Activated CD4-positive, alpha-beta T cell treated with anti-CD3 and anti-CD28 coated beads for 36 hours (primary cell): ENCODE measurements at regions of chr5 and their contacts with region 1.

Region 1: GRCh38 chr5:177113566-177114424 is 19.8 kb upstream of the NSD1 start:
- DNase-seq: peak; percentile 88
- ATAC-seq: peak; percentile 49
- H3K4me3 Mint-ChIP-seq: no peak overlapping the region
- H3K27ac Mint-ChIP-seq: peak overlapping the region; percentile 11
- H3K4me1 Mint-ChIP-seq: peaks cover 15% of the 10 kb centered on the region
- H3K27me3 Mint-ChIP-seq: no peaks in the 10 kb centered on the region

Region 2: GRCh38 chr5:176660860-176661641 is 452.7 kb before region 1 on chr5:
- CTCF ChIA-PET with region 1: interaction called, 13 read pairs
- POLR2A ChIA-PET with region 1: no interaction called
- intact Hi-C with region 1: loop called (anchors 1 to 5 kb)
- DNase-seq: peak; percentile 89
- ATAC-seq: peak; percentile 78
- H3K4me3 Mint-ChIP-seq: no peak overlapping the region
- H3K27ac Mint-ChIP-seq: no peak overlapping the region
- H3K4me1 Mint-ChIP-seq: peaks cover 29% of the 10 kb centered on the region
- H3K27me3 Mint-ChIP-seq: peaks cover 8% of the 10 kb centered on the region

Region 3: GRCh38 chr5:177086924-177087706 is 26.7 kb before region 1 on chr5:
- CTCF ChIA-PET with region 1: interaction called, 17 read pairs
- POLR2A ChIA-PET with region 1: no interaction called
- intact Hi-C with region 1: loop called in 1 of 2 experiments (anchors 1 kb)
- DNase-seq: peak; percentile 78
- ATAC-seq: peak; percentile 86
- H3K4me3 Mint-ChIP-seq: peak overlapping the region; percentile 13
- H3K27ac Mint-ChIP-seq: no peak overlapping the region
- H3K4me1 Mint-ChIP-seq: peaks cover 2% of the 10 kb centered on the region
- H3K27me3 Mint-ChIP-seq: peaks cover 18% of the 10 kb centered on the region

Region 4: GRCh38 chr5:177154003-177154643 is 40.3 kb after region 1 on chr5:
- CTCF ChIA-PET with region 1: interaction called, 9 read pairs
- POLR2A ChIA-PET with region 1: no interaction called
- intact Hi-C with region 1: loop called in 1 of 2 experiments (anchors 5 kb)
- DNase-seq: no peak
- ATAC-seq: no peak
- H3K4me3 Mint-ChIP-seq: no peak overlapping the region
- H3K27ac Mint-ChIP-seq: no peak overlapping the region
- H3K4me1 Mint-ChIP-seq: peaks cover 10% of the 10 kb centered on the region
- H3K27me3 Mint-ChIP-seq: no peaks in the 10 kb centered on the region

Region 5: GRCh38 chr5:177296581-177296980 is 182.8 kb after region 1 on chr5:
- CTCF ChIA-PET with region 1: interaction called, 13 read pairs
- POLR2A ChIA-PET with region 1: no interaction called
- intact Hi-C with region 1: no loop called
- DNase-seq: no peak
- ATAC-seq: no peak
- H3K4me3 Mint-ChIP-seq: no peak overlapping the region
- H3K27ac Mint-ChIP-seq: peak overlapping the region; percentile 2
- H3K4me1 Mint-ChIP-seq: peaks cover 46% of the 10 kb centered on the region
- H3K27me3 Mint-ChIP-seq: no peaks in the 10 kb centered on the region

Region 6: DNA sequence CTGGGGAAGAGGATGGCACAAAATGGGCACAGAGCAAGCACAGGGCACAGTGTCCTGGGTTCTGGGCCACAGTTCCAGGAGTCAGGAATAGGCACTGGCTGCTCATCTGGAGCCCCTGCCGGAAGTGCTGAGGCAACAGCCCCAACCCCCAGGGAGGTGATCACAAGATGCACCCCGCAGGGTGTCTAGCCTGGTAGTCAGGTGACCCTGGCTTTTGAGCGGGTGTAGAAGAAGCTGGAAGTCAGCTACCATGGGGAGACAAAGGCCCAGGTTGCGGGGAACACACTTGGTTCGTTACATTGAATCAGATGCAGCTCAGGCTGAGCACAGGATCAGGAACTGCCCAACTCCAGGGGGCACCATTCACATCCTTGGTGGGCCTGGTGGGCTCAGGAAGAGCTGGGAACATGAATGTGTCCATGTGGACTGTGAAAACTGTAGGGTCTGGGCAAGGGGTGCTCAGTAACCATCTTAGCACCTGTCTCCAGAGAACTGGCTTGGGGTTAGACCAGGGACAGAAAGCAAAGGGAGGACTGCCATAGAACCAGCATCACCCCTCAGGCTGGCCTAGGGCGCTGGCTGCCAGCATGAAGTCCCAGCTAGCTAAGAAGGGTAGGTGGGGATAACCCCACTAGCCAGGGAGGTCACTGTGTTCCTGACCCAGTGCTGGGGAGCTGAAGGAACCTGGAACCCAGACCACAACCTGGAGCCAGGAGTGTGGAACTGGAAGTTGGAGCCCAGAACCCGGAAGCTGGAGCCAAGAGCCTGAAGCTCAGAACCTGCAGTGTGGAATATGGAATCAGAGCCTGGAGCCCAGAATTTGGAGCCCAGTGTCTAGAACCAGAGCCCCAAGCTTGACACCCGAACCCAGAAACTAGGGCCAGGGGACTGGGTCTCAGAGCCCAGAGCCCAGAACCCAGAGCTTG is 264.3 kb after region 1 on chr5:
- CTCF ChIA-PET with region 1: no interaction called
- POLR2A ChIA-PET with region 1: no interaction called
- intact Hi-C with region 1: no loop called
- DNase-seq: no peak
- ATAC-seq: no peak
- H3K4me3 Mint-ChIP-seq: no peak overlapping the region
- H3K27ac Mint-ChIP-seq: no peak overlapping the region
- H3K4me1 Mint-ChIP-seq: peaks cover 47% of the 10 kb centered on the region
- H3K27me3 Mint-ChIP-seq: no peaks in the 10 kb centered on the region

Region 7: DNA sequence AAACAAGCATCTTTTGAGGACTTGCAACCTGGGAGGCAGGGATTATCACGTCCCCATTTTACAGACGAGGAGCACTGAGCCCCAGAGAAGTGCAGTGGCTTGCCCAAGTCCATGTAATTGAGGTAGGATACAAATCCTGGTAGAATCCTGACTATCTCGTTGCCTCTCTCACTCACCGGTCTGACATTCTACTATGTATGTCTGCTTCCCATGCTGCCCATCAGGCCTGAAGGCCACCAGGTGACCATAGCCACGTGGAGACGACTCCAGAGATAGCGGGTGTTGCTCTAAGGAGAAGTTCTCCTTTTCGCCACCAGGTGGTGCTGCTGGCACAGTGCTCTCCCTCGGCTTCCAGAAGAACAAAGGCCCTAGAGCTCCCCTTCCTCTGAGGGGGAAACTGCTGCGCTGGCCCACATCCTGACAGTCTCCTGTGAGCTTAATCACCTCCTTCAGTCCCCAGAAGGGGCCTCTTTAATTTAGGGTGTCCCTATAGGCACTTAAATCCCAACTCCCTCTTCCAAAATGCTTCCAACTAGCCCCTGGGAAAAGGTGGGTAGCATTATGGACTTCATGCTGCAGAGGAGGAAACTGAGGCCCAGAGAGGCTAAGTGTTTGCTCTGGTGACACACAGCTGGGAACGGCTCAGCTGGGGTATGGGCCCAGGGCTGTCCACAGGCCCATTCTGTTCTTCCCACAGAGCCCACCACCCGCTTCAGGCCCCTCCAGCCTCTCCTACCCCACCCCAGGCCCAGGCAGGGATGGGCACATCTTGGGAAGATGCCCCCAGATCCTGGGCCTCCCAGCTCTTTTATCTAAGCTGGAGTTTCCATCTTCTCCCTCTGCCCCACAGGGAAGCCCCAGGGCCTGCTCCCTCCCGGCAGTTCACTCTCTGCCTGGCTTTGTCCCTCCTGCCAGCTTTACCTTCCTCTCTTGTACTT is 276.8 kb after region 1 on chr5:
- CTCF ChIA-PET with region 1: interaction called, 7 read pairs
- POLR2A ChIA-PET with region 1: no interaction called
- intact Hi-C with region 1: loop called in 1 of 2 experiments (anchors 1 kb)
- DNase-seq: peak; percentile 94
- ATAC-seq: peak; percentile 68
- H3K4me3 Mint-ChIP-seq: peak overlapping the region; percentile 52
- H3K27ac Mint-ChIP-seq: peak overlapping the region; percentile 87
- H3K4me1 Mint-ChIP-seq: peaks cover 36% of the 10 kb centered on the region
- H3K27me3 Mint-ChIP-seq: no peaks in the 10 kb centered on the region